Ascending aorta (tissue), 2 donors: ENCODE measurements at regions of chr5 and their contacts with region 1.

Region 1: DNA sequence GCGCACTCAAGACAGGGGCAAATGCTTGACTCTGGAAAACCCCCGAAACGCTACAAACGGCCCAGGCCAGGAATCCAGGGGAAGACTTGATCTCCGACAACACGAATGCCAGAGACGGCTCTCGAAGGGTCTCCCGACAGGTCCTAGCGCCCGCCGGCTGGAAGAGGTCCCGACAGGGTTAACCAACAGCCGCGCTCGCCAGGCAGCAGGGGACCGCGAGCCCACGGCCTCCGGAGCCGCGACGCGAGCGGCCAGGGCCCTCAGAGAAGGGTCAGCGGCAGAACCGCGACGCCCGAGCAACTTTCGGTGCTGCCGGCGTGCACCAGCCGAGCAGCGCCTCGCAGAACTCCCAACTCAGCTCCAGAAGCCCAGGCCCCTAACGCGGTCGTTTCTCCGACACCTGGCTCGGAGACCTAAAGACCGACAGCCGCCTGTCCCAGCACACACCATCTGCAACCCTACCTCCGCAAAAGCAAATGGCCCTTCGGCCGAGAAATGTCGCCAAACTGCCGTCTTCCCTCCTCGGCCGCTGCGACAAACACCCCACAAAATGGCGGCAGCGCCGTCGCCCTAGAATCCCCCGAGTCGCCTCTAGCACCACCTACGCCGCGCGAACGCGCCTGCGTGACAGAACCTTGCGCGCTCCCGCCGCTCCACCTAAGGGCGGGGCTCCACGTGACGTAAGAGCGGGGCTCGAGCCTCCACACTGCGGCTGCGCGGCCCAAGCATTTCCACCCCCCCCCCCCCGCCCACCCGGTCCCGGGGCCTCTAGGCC is at the start of gene CLK4:
- DNase-seq: peak; percentile 77 to 98
- H3K4me3 ChIP-seq: peak within 1 kb of the TSS; percentile 88 to 91
- H3K27ac ChIP-seq: peak within 1 kb of the TSS; percentile 96 to 97
- H3K4me1 ChIP-seq: peaks cover 0 to 16% of the 10 kb centered on the region in 2 donors
- H3K27me3 ChIP-seq: no peaks in the 10 kb centered on the region
- CTCF ChIP-seq: no peak
- total RNA-seq, gene CLK4: 17.6 TPM

Region 2: GRCh38 chr5:178213003-178213449 is 413.6 kb before region 1 on chr5:
- intact Hi-C with region 1: loop called (anchors 5 kb)
- DNase-seq: no peak
- H3K4me3 ChIP-seq: no peak overlapping the region
- H3K27ac ChIP-seq: no peak overlapping the region
- H3K4me1 ChIP-seq: no peaks in the 10 kb centered on the region
- H3K27me3 ChIP-seq: no peaks in the 10 kb centered on the region
- CTCF ChIP-seq: no peak

Region 3: GRCh38 chr5:178483620-178484019 is 143.1 kb before region 1 on chr5:
- intact Hi-C with region 1: no loop called
- DNase-seq: peak; percentile 24 to 70
- H3K4me3 ChIP-seq: no peak overlapping the region
- H3K27ac ChIP-seq: no peak overlapping the region
- H3K4me1 ChIP-seq: no peaks in the 10 kb centered on the region
- H3K27me3 ChIP-seq: no peaks in the 10 kb centered on the region
- CTCF ChIP-seq: no peak

Region 4: GRCh38 chr5:178732281-178732680 is 105.6 kb after region 1 on chr5:
- intact Hi-C with region 1: loop called (anchors 1 kb)
- DNase-seq: no peak
- H3K4me3 ChIP-seq: no peak overlapping the region
- H3K27ac ChIP-seq: no peak overlapping the region
- H3K4me1 ChIP-seq: peaks cover 2 to 3% of the 10 kb centered on the region in 2 donors
- H3K27me3 ChIP-seq: no peaks in the 10 kb centered on the region
- CTCF ChIP-seq: no peak

Region 5: GRCh38 chr5:179023528-179024430 is 397.1 kb after region 1 on chr5 and contains the start of gene ZNF879:
- intact Hi-C with region 1: loop called (anchors 2 kb)
- DNase-seq: peak; percentile 58 to 97
- H3K4me3 ChIP-seq: peak within 1 kb of the TSS; percentile 67 to 88
- H3K27ac ChIP-seq: peak within 1 kb of the TSS; percentile 70 to 95
- H3K4me1 ChIP-seq: peaks cover 0 to 3% of the 10 kb centered on the region in 2 donors
- H3K27me3 ChIP-seq: no peaks in the 10 kb centered on the region
- CTCF ChIP-seq: no peak
- total RNA-seq, gene ZNF879: 38.8 TPM

Region 6: GRCh38 chr5:179284751-179285631 is 658.3 kb after region 1 on chr5:
- intact Hi-C with region 1: no loop called
- DNase-seq: no peak
- H3K4me3 ChIP-seq: no peak overlapping the region
- H3K27ac ChIP-seq: peak overlapping the region; percentile 32 to 43
- H3K4me1 ChIP-seq: peaks cover 7 to 21% of the 10 kb centered on the region in 2 donors
- H3K27me3 ChIP-seq: no peaks in the 10 kb centered on the region
- CTCF ChIP-seq: no peak

Region 7: GRCh38 chr5:179550511-179551230 is 924.0 kb after region 1 on chr5 and contains the start of gene RUFY1:
- intact Hi-C with region 1: loop called (anchors 5 kb)
- DNase-seq: peak; percentile 24 to 85
- H3K4me3 ChIP-seq: peak within 1 kb of the TSS; percentile 84 to 95
- H3K27ac ChIP-seq: peak within 1 kb of the TSS; percentile 92 to 98
- H3K4me1 ChIP-seq: peaks cover 6 to 19% of the 10 kb centered on the region in 2 donors
- H3K27me3 ChIP-seq: no peaks in the 10 kb centered on the region
- CTCF ChIP-seq: peak in 1 of 3 experiments; percentile 33
- total RNA-seq, gene RUFY1: 12.2 TPM

Region 8: GRCh38 chr5:180071531-180072255 is 1445.0 kb after region 1 on chr5 and contains the start of gene RNF130:
- intact Hi-C with region 1: loop called (anchors 2 kb)
- DNase-seq: peak; percentile 72 to 95
- H3K4me3 ChIP-seq: peak within 1 kb of the TSS; percentile 74 to 94
- H3K27ac ChIP-seq: peak within 1 kb of the TSS; percentile 94 to 98
- H3K4me1 ChIP-seq: peaks cover 0 to 10% of the 10 kb centered on the region in 2 donors
- H3K27me3 ChIP-seq: no peaks in the 10 kb centered on the region
- CTCF ChIP-seq: no peak
- total RNA-seq, gene RNF130: 86.7 TPM